Right ventricle myocardium inferior (tissue), 1 donor: ENCODE measurements at regions of chr7 and their contacts with region 1.

Region 1: GRCh38 chr7:153381275-153382040 is 621.9 kb downstream of the ACTR3B start:
- DNase-seq: no peak
- ATAC-seq: peak; percentile 73

Region 2: GRCh38 chr7:153682628-153683027 is 301.2 kb after region 1 on chr7:
- intact Hi-C with region 1: loop called (anchors 5 kb)
- DNase-seq: no peak
- ATAC-seq: no peak

Region 3: GRCh38 chr7:153832156-153832555 is 450.7 kb after region 1 on chr7:
- intact Hi-C with region 1: loop called (anchors 5 kb)
- DNase-seq: no peak
- ATAC-seq: no peak